SK-N-SH (cell line): ENCODE measurements at regions of chr10 and their contacts with region 1.

Region 1: GRCh38 chr10:58291538-58292174 is 22.7 kb downstream of the CISD1 start:
- DNase-seq: peak; percentile 56
- H3K4me3 ChIP-seq: no peak overlapping the region; a peak in 1 of 4 replicates
- H3K27ac ChIP-seq: peak overlapping the region in 1 of 2 experiments; percentile 47; a peak in 2 of 4 replicates
- H3K4me1 ChIP-seq: peaks cover 0 to 6% of the 10 kb centered on the region in 2 experiments; a peak in 1 of 4 replicates
- H3K27me3 ChIP-seq: no peaks in the 10 kb centered on the region
- CTCF ChIP-seq: peak; percentile 87
- EP300 ChIP-seq: no peak
- RAD21 ChIP-seq: peak; percentile 95

Region 2: GRCh38 chr10:58152673-58153263 is 138.9 kb before region 1 on chr10:
- CTCF ChIA-PET with region 1: interaction called, 16 read pairs
- POLR2A ChIA-PET with region 1: no interaction called
- DNase-seq: peak; percentile 41
- H3K4me3 ChIP-seq: no peak overlapping the region
- H3K27ac ChIP-seq: no peak overlapping the region
- H3K4me1 ChIP-seq: peaks cover 0 to 4% of the 10 kb centered on the region in 2 experiments; a peak in 1 of 4 replicates
- H3K27me3 ChIP-seq: no peaks in the 10 kb centered on the region
- CTCF ChIP-seq: peak; percentile 70
- EP300 ChIP-seq: no peak
- RAD21 ChIP-seq: peak; percentile 82

Region 3: DNA sequence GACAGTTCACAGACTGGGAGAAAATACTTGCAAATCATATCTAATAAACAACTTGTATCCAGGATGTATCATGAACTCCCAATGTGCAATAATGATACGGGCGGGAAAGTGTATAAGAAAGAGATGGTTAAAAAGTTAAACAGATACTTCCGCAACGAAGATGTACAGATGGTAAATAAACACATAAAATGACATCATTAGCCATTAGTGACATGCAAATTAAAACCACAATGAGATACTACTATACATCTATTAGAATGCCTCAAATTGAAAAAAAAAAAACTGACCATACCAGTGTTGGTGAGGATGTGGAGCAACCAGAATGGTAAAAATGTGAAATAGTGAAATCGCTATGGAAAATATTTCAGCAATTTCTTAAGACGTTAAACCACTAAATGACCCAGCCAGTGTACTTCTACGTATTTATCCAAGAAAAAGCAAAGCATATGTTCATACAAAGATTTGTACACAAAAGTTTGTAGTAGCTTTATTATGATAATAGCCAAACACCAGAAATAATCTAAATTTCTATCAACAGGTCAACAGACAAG is 107.5 kb before region 1 on chr10:
- CTCF ChIA-PET with region 1: interaction called, 200 read pairs
- POLR2A ChIA-PET with region 1: no interaction called
- DNase-seq: no peak
- H3K4me3 ChIP-seq: no peak overlapping the region
- H3K27ac ChIP-seq: no peak overlapping the region
- H3K4me1 ChIP-seq: no peaks in the 10 kb centered on the region
- H3K27me3 ChIP-seq: no peaks in the 10 kb centered on the region
- CTCF ChIP-seq: no peak
- EP300 ChIP-seq: no peak
- RAD21 ChIP-seq: no peak

Region 4: GRCh38 chr10:58268870-58269605 is 22.6 kb before region 1 on chr10 and contains the start of gene CISD1:
- CTCF ChIA-PET with region 1: interaction called, 25 read pairs
- POLR2A ChIA-PET with region 1: interaction called, 3 read pairs
- DNase-seq: peak; percentile 96
- H3K4me3 ChIP-seq: peak within 1 kb of the TSS; percentile 74 to 96
- H3K27ac ChIP-seq: peak within 1 kb of the TSS; percentile 92 to 93
- H3K4me1 ChIP-seq: peaks cover 8 to 16% of the 10 kb centered on the region in 2 experiments; a peak in 3 of 4 replicates
- H3K27me3 ChIP-seq: no peaks in the 10 kb centered on the region
- CTCF ChIP-seq: no peak
- EP300 ChIP-seq: 0 out of 4 replicates have a peak, but pooled peaks of 1 of the 2 experiments have one; percentile 7
- RAD21 ChIP-seq: no peak
- polyA plus RNA-seq, gene CISD1: 34.1 and 40.8 TPM in 2 replicates

Region 5: DNA sequence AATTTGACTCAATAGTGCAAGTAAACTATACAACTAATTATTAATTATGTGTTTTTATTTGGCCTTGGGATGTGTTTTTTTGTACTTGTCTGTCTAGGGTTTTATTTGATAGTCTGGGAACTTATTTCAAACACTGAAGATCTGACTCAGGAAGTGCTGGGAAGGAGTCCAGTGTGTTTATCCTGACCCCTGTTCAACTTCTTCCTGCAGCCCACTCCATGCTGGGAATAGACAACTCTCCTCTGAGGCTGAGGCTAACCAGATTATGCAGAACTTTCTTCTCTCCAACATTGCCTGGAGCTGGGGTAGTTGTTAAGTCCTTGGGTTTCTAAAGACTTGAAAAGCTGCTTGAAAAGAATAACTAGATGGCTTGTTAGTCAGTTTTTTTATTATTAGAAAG is 15.7 kb before region 1 on chr10:
- CTCF ChIA-PET with region 1: interaction called, 25 read pairs
- POLR2A ChIA-PET with region 1: interaction called, 3 read pairs
- DNase-seq: no peak
- H3K4me3 ChIP-seq: no peak overlapping the region
- H3K27ac ChIP-seq: peak overlapping the region; percentile 16 to 70; a peak in 3 of 4 replicates
- H3K4me1 ChIP-seq: peaks cover 2 to 26% of the 10 kb centered on the region in 2 experiments; a peak in 3 of 4 replicates
- H3K27me3 ChIP-seq: no peaks in the 10 kb centered on the region
- CTCF ChIP-seq: no peak
- EP300 ChIP-seq: no peak
- RAD21 ChIP-seq: no peak

Region 6: DNA sequence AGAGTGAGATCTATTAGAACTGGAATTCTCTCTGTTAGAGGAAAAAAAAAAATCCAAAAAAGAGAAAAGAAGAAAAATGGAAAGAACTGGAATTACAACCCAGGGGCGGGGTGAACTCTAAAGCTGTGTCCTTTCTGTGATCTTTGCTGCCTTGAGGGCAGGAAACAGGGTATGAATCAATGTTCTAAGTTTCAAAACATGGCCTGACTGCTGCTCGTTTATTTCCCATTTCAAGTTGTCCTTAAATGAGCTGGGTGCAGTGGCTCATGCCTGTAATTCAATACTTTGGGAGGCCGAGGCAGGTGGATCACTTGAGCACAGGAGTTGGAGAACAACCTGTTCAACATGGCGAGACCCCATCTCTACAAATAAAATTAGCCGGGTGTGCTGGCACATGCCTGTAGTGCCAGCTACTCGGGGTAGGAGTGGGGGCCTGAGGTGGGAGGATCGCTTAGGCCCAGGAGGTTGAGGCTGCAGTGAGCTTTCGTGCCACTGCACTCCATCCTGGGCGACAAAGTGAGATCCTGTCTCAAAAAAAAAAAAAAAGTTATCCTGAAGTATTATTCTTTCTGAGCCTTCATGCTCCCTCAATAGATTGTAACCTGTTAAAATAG is 68.8 kb after region 1 on chr10:
- CTCF ChIA-PET with region 1: no interaction called
- POLR2A ChIA-PET with region 1: no interaction called
- DNase-seq: no peak
- H3K4me3 ChIP-seq: no peak overlapping the region
- H3K27ac ChIP-seq: no peak overlapping the region
- H3K4me1 ChIP-seq: peaks cover 2 to 4% of the 10 kb centered on the region in 2 experiments; a peak in 2 of 4 replicates
- H3K27me3 ChIP-seq: no peaks in the 10 kb centered on the region
- CTCF ChIP-seq: no peak
- EP300 ChIP-seq: no peak
- RAD21 ChIP-seq: no peak